Heart right ventricle (tissue), 16 donors: ENCODE measurements at regions of chr13 and their contacts with region 1.

Region 1: GRCh38 chr13:30422054-30422839 is at the start of gene UBE2L5:
- DNase-seq: peak; percentile 73 to 84
- ATAC-seq: peak; percentile 90 to 97 (median 93)
- H3K4me3 ChIP-seq: peak within 1 kb of the TSS; percentile 26 to 80 (median 66)
- H3K27ac ChIP-seq: peak within 1 kb of the TSS; percentile 85 to 98 (median 93)
- H3K4me1 ChIP-seq: peaks cover 0 to 20% (median 9%) of the 10 kb centered on the region in 9 donors
- H3K27me3 ChIP-seq: no peaks in the 10 kb centered on the region
- CTCF ChIP-seq: no peak
- total RNA-seq, gene UBE2L5: 0.42 TPM in 1 of 10 donors, not detected in the others

Region 2: DNA sequence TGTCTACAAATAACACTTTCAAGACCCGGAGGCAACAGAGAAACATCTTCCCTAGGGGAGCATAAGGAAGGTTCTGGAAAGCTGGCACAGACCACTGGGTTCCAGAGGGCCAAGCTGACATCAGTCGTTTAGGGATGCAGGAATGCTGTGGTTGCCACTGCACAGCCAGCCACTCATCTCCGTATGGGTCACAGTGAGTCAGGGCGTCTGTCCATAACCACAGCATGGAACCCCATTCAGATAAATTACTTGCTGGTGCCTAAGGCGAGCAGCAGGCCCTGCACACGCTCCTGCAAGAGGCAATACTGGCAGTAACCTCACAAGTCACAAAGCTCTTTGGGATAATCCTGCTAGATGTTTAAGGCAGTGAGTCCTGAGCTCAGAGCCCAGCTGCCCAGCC is 430.9 kb before region 1 on chr13:
- intact Hi-C with region 1: no loop called
- DNase-seq: no peak
- ATAC-seq: no peak
- H3K4me3 ChIP-seq: no peak overlapping the region
- H3K27ac ChIP-seq: no peak overlapping the region
- H3K4me1 ChIP-seq: no peaks in the 10 kb centered on the region
- H3K27me3 ChIP-seq: peaks cover 0 to 5% (median 0%) of the 10 kb centered on the region in 7 donors
- CTCF ChIP-seq: no peak

Region 3: DNA sequence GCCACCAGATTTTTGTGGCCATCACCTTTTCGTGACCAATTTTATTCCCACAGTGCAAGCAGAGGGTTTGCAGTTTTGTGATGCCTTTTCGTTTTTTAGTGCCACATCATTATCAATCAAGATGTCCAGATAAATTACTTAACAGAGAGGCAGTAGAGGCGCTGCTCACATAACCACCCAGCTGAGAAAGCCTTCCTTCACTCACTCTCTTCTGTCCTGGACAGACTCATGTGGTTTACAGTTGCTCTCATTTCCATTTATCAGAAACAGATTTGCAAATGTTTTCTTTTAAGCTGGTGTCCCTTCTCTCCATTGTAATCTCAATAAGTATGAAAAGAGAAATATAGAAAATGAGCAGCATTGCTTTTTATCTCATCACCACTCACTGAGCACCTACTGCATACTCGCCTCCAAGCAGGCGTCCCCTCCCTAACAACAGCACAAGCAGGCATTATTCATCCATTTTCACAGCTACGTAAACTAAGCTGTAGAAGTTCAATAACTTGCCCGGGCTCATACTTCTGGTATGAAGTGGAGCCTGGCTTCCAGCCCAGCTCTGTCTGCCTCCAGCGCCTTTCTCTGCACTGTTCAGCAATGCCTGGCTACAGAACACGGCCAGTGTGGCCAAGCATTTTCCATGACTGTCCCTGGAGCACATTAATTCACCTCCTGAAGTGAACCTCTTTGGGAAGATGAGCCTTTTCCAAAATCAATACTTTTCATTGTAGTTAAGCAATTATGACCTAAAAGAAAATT is 80.3 kb before region 1 on chr13:
- intact Hi-C with region 1: loop called in 1 of 10 experiments (anchors 2 kb)
- DNase-seq: peak; percentile 81
- ATAC-seq: peak; percentile 84 to 93 (median 88)
- H3K4me3 ChIP-seq: no peak overlapping the region
- H3K27ac ChIP-seq: peak overlapping the region; percentile 10 to 89 (median 77)
- H3K4me1 ChIP-seq: peaks cover 2 to 46% (median 32%) of the 10 kb centered on the region in 9 donors
- H3K27me3 ChIP-seq: no peaks in the 10 kb centered on the region
- CTCF ChIP-seq: no peak

Region 4: DNA sequence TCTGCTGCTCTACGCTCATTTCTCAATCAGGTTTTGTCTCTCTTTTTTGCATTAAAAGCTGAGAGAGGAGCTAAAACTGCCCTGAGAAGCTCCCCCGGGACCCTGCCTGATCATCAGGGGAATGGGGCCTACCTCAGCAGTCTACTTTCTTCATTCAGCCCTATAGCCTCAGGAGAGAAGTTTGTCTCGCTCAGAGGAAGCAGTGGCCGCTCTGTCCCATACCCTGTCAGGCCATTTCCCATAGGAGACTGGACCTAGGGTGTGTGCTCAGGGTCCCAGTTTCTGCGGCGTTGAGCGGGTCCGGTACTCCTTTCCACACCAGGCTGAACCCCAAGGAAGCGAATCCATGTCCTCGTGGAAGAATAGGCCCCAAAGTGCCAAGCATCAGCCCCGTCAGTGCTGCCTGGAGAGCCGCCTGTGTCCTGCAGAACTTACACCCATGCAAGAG is 21.7 kb after region 1 on chr13:
- intact Hi-C with region 1: loop called in 2 of 10 experiments (anchors 1 to 2 kb)
- DNase-seq: no peak
- ATAC-seq: no peak
- H3K4me3 ChIP-seq: no peak overlapping the region
- H3K27ac ChIP-seq: no peak overlapping the region
- H3K4me1 ChIP-seq: peaks cover 0 to 26% (median 16%) of the 10 kb centered on the region in 9 donors
- H3K27me3 ChIP-seq: no peaks in the 10 kb centered on the region
- CTCF ChIP-seq: no peak

Region 5: DNA sequence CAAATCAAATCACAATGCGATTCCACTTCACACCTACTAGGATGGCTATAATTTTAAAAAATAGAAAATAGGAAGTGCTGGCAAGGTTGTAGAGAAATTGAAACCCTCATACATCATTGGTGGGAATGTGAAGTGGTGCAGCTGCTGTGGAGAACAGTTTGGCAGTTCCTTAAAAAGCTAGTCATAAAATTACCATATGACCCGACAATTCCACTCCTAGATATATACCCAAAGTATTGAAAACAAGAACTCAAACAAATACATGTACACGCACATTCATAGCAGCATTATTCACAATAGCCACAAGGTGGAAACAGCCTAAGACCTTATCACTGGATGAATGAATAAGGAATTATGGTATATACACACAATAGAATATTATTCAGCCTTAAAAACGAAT is 31.5 kb after region 1 on chr13:
- intact Hi-C with region 1: loop called in 1 of 10 experiments (anchors 5 kb)
- DNase-seq: no peak
- ATAC-seq: no peak
- H3K4me3 ChIP-seq: no peak overlapping the region
- H3K27ac ChIP-seq: no peak overlapping the region
- H3K4me1 ChIP-seq: peaks cover 0 to 3% (median 0%) of the 10 kb centered on the region in 9 donors
- H3K27me3 ChIP-seq: no peaks in the 10 kb centered on the region
- CTCF ChIP-seq: peak in 2 of 9 donors; percentile 6 to 9

Region 6: DNA sequence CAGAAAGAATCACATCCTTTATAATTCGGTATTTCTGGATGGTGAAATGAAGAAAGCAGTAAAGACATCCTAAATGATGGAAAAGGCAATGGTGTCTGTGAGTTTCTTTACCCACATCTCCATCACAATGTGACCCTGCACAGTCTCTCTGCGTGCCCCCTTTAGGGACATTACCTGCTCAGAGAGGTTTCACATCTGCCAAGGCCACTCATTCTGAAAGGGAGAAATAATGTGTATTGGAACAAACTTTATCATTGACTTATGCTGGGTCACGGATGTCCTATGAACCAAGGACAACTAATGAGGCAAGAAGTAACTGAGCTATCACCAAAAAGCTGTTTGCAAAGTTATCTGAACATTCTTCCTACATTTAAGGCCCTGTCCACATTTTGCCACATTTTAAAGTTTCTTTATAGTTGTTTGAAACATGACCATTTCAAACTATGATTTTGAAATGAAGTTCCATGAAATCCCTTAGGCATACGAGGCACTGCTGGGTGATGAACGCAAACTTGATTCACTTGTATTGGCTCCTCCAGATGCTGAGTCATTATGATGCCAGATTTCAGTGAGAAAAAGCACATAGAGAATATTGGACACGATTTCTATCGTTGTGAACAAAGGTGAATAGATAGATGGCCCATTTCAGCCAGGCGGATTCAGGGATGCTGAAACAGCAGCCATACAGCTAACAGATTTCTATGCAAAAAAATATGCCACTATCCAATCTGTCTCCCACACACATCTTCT is 107.0 kb after region 1 on chr13:
- intact Hi-C with region 1: no loop called
- DNase-seq: no peak
- ATAC-seq: no peak
- H3K4me3 ChIP-seq: no peak overlapping the region
- H3K27ac ChIP-seq: no peak overlapping the region
- H3K4me1 ChIP-seq: no peaks in the 10 kb centered on the region
- H3K27me3 ChIP-seq: no peaks in the 10 kb centered on the region
- CTCF ChIP-seq: no peak

Region 7: GRCh38 chr13:30617315-30618185 is 195.3 kb after region 1 on chr13 and contains the start of gene USPL1:
- intact Hi-C with region 1: loop called in 3 of 10 experiments (anchors 1 to 5 kb)
- DNase-seq: peak; percentile 98 to 99
- ATAC-seq: peak; percentile 95 to 99 (median 97)
- H3K4me3 ChIP-seq: peak within 1 kb of the TSS; percentile 63 to 91 (median 80)
- H3K27ac ChIP-seq: peak within 1 kb of the TSS; percentile 96 to 100 (median 99)
- H3K4me1 ChIP-seq: peaks cover 0 to 44% (median 27%) of the 10 kb centered on the region in 9 donors
- H3K27me3 ChIP-seq: no peaks in the 10 kb centered on the region
- CTCF ChIP-seq: peak in 8 of 9 donors; percentile 14 to 47 (median 38)
- total RNA-seq, gene USPL1: 8.9 to 10.6 (median 9.8) TPM